B cell (primary cell): ENCODE measurements at regions of chr5 and their contacts with region 1.

Region 1: GRCh38 chr5:131773805-131774204 is 23.0 kb downstream of the FNIP1 start:
- DNase-seq: no peak
- ATAC-seq: no peak
- H3K4me3 ChIP-seq: no peak overlapping the region
- H3K4me3 Mint-ChIP-seq: no peak overlapping the region
- H3K27ac ChIP-seq: no peak overlapping the region
- H3K27ac Mint-ChIP-seq: no peak overlapping the region
- H3K4me1 ChIP-seq: peaks cover 15 to 31% of the 10 kb centered on the region in 2 donors
- H3K4me1 Mint-ChIP-seq: peaks cover 36% of the 10 kb centered on the region
- H3K27me3 ChIP-seq: no peaks in the 10 kb centered on the region
- H3K27me3 Mint-ChIP-seq: no peaks in the 10 kb centered on the region
- CTCF ChIP-seq: no peak

Region 2: GRCh38 chr5:131634996-131635754 is 138.6 kb before region 1 on chr5 and contains the start of gene RAPGEF6:
- CTCF ChIA-PET with region 1: no interaction called
- POLR2A ChIA-PET with region 1: no interaction called
- intact Hi-C with region 1: no loop called
- DNase-seq: peak; percentile 100
- ATAC-seq: peak; percentile 83
- H3K4me3 ChIP-seq: peak within 1 kb of the TSS; percentile 77 to 91 (median 86)
- H3K4me3 Mint-ChIP-seq: peak within 1 kb of the TSS; percentile 95
- H3K27ac ChIP-seq: peak within 1 kb of the TSS; percentile 91 to 99
- H3K27ac Mint-ChIP-seq: peak within 1 kb of the TSS; percentile 99
- H3K4me1 ChIP-seq: peaks cover 41 to 46% of the 10 kb centered on the region in 2 donors
- H3K4me1 Mint-ChIP-seq: peaks cover 40% of the 10 kb centered on the region
- H3K27me3 ChIP-seq: no peaks in the 10 kb centered on the region
- H3K27me3 Mint-ChIP-seq: no peaks in the 10 kb centered on the region
- CTCF ChIP-seq: no peak
- total RNA-seq, gene RAPGEF6: 48.7 and 56.2 TPM in 2 replicates

Region 3: DNA sequence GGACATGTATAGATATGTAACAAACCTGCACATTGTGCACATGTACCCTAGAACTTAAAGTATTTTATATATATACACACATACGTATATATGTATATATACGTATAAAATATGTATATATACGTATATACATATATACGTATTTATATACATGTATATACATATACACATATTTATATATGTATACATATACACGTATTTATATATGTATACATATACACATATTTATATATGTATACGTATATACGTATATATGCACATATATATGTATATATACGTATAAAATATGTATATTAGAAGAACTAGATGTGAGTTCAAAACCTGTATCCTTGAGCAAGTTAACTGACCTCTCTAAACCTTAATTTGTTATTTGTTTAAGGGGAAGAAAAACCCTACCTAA is 38.4 kb before region 1 on chr5:
- CTCF ChIA-PET with region 1: no interaction called
- POLR2A ChIA-PET with region 1: no interaction called
- intact Hi-C with region 1: loop called (anchors 5 kb)
- DNase-seq: no peak
- ATAC-seq: no peak
- H3K4me3 ChIP-seq: no peak overlapping the region
- H3K4me3 Mint-ChIP-seq: no peak overlapping the region
- H3K27ac ChIP-seq: no peak overlapping the region
- H3K27ac Mint-ChIP-seq: no peak overlapping the region
- H3K4me1 ChIP-seq: no peaks in the 10 kb centered on the region
- H3K4me1 Mint-ChIP-seq: peaks cover 2% of the 10 kb centered on the region
- H3K27me3 ChIP-seq: no peaks in the 10 kb centered on the region
- H3K27me3 Mint-ChIP-seq: no peaks in the 10 kb centered on the region
- CTCF ChIP-seq: no peak